IMR-90 (cell line): ENCODE measurements at regions of chr1 and their contacts with region 1.

Region 1: DNA sequence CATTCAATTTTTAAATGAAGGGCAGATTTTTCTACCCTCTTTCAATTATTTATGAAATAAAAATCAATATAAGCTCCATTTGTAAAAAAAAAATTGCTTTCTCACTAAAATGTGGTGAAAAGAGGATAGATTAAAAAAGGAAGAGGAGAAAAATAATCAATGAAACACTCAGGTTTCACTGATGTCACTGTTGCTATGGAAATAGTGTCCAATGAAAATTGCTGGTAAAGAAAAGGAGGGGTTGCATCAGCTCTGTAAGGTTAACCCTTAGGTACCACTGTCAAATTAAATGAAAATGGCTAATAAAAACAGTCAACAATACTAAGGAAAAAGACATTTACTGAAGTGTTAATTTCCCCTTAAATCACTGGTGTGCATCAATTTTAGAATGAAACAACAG is 91.6 kb upstream of the TTC39A start:
- DNase-seq: peak; percentile 82
- ATAC-seq: peak; percentile 70
- H3K4me3 ChIP-seq: no peak overlapping the region
- H3K27ac ChIP-seq: peak overlapping the region; percentile 13; the same call in 1 of the 2 replicates
- H3K4me1 ChIP-seq: peaks cover 15% of the 10 kb centered on the region
- H3K27me3 ChIP-seq: no peaks in the 10 kb centered on the region
- CTCF ChIP-seq: no peak
- POLR2A ChIP-seq: no peak
- RAD21 ChIP-seq: no peak

Region 2: GRCh38 chr1:51235673-51236530 is 186.1 kb before region 1 on chr1 and contains the start of gene RNF11:
- CTCF ChIA-PET with region 1: no interaction called
- POLR2A ChIA-PET with region 1: no interaction called
- dilution Hi-C with region 1: no loop called
- in situ Hi-C with region 1: no loop called
- intact Hi-C with region 1: loop called (anchors 1 kb)
- DNase-seq: peak; percentile 86
- ATAC-seq: peak; percentile 96
- H3K4me3 ChIP-seq: peak within 1 kb of the TSS; percentile 85
- H3K27ac ChIP-seq: peak within 1 kb of the TSS; percentile 94
- H3K4me1 ChIP-seq: peaks cover 8% of the 10 kb centered on the region
- H3K27me3 ChIP-seq: no peaks in the 10 kb centered on the region
- CTCF ChIP-seq: no peak
- POLR2A ChIP-seq: peak; percentile 95
- RAD21 ChIP-seq: no peak; the same call in 1 of the 2 replicates
- total RNA-seq, gene RNF11: 63.3 and 119 TPM in 2 replicates

Region 3: GRCh38 chr1:51264451-51264850 is 157.5 kb before region 1 on chr1:
- CTCF ChIA-PET with region 1: no interaction called
- POLR2A ChIA-PET with region 1: no interaction called
- dilution Hi-C with region 1: no loop called
- in situ Hi-C with region 1: no loop called
- intact Hi-C with region 1: loop called (anchors 10 kb)
- DNase-seq: peak; percentile 96
- ATAC-seq: peak; percentile 85
- H3K4me3 ChIP-seq: no peak overlapping the region
- H3K27ac ChIP-seq: no peak overlapping the region
- H3K4me1 ChIP-seq: peaks cover 17% of the 10 kb centered on the region
- H3K27me3 ChIP-seq: no peaks in the 10 kb centered on the region
- CTCF ChIP-seq: no peak
- POLR2A ChIP-seq: no peak
- RAD21 ChIP-seq: no peak

Region 4: GRCh38 chr1:51463561-51463960 is 41.6 kb after region 1 on chr1:
- CTCF ChIA-PET with region 1: no interaction called
- POLR2A ChIA-PET with region 1: no interaction called
- dilution Hi-C with region 1: no loop called
- in situ Hi-C with region 1: no loop called
- intact Hi-C with region 1: loop called (anchors 5 kb)
- DNase-seq: no peak
- ATAC-seq: no peak
- H3K4me3 ChIP-seq: no peak overlapping the region
- H3K27ac ChIP-seq: no peak overlapping the region
- H3K4me1 ChIP-seq: no peaks in the 10 kb centered on the region
- H3K27me3 ChIP-seq: no peaks in the 10 kb centered on the region
- CTCF ChIP-seq: no peak
- POLR2A ChIP-seq: no peak
- RAD21 ChIP-seq: no peak

Region 5: DNA sequence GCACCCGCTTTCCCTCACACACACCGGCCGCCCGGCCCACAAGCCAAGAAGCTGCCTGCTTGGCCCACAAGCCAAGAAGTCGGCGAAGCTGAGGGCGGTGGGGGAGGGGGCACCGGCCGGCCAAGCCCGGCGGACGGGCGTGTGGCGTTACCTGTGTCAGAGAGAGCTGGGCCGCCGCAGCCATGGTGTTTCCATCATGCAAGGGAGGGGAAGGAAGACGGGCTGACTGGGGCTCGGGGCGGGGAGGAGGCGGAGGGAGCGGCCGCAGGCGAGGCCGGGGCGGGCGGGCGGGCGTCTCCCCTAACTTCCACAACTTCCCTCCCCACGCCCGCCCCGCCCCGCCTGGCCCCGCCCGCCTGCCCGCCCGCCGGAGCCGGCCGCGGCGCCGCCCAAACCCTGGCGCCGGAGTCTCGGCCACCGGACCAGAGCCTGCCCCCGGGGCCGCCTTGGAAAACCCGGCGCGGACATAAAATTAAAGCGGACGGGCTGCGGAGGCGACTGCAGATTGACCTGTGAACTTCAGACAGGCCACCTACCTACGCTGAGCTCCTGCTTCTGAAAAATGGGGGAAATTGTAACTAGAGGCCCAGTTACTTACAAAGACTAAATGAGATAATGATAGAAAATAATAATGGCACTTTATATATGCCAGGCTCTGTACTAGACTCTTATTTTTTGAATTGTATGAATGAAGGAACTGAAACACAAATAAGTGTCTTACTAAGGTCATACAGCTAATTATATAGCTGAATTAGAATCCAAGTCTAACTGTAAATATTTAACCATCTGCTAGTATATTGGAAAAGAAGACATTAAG is 97.3 kb after region 1 on chr1 and contains the start of gene EPS15:
- CTCF ChIA-PET with region 1: interaction called, 3 read pairs
- POLR2A ChIA-PET with region 1: no interaction called
- dilution Hi-C with region 1: no loop called
- in situ Hi-C with region 1: no loop called
- intact Hi-C with region 1: loop called (anchors 5 kb)
- DNase-seq: peak; percentile 67
- ATAC-seq: peak; percentile 89
- H3K4me3 ChIP-seq: peak within 1 kb of the TSS; percentile 98
- H3K27ac ChIP-seq: peak within 1 kb of the TSS; percentile 88
- H3K4me1 ChIP-seq: peaks cover 9% of the 10 kb centered on the region
- H3K27me3 ChIP-seq: no peaks in the 10 kb centered on the region
- CTCF ChIP-seq: no peak
- POLR2A ChIP-seq: no peak
- RAD21 ChIP-seq: no peak
- total RNA-seq, gene EPS15: 38.0 and 47.5 TPM in 2 replicates